Sigmoid colon (tissue), 7 donors: ENCODE measurements at regions of chr1 and their contacts with region 1.

Region 1: GRCh38 chr1:74771913-74772515 is 39.1 kb downstream of the TYW3 start:
- DNase-seq: no peak
- H3K4me3 ChIP-seq: no peak overlapping the region
- H3K27ac ChIP-seq: no peak overlapping the region
- H3K4me1 ChIP-seq: no peaks in the 10 kb centered on the region
- H3K27me3 ChIP-seq: peaks cover 0 to 4% (median 0%) of the 10 kb centered on the region in 3 donors
- CTCF ChIP-seq: peak in 3 of 4 experiments; percentile 38 to 71 (median 51)
- EP300 ChIP-seq: no peak
- POLR2A ChIP-seq: no peak

Region 2: GRCh38 chr1:75203415-75204277 is 431.6 kb after region 1 on chr1:
- intact Hi-C with region 1: loop called (anchors 5 kb)
- DNase-seq: no peak
- H3K4me3 ChIP-seq: no peak overlapping the region
- H3K27ac ChIP-seq: no peak overlapping the region
- H3K4me1 ChIP-seq: no peaks in the 10 kb centered on the region
- H3K27me3 ChIP-seq: no peaks in the 10 kb centered on the region
- CTCF ChIP-seq: peak in 3 of 4 experiments; percentile 17 to 48 (median 47)
- EP300 ChIP-seq: no peak
- POLR2A ChIP-seq: no peak